ENCODE measurements at regions of chr18 and their contacts with region 1.

Region 1: DNA sequence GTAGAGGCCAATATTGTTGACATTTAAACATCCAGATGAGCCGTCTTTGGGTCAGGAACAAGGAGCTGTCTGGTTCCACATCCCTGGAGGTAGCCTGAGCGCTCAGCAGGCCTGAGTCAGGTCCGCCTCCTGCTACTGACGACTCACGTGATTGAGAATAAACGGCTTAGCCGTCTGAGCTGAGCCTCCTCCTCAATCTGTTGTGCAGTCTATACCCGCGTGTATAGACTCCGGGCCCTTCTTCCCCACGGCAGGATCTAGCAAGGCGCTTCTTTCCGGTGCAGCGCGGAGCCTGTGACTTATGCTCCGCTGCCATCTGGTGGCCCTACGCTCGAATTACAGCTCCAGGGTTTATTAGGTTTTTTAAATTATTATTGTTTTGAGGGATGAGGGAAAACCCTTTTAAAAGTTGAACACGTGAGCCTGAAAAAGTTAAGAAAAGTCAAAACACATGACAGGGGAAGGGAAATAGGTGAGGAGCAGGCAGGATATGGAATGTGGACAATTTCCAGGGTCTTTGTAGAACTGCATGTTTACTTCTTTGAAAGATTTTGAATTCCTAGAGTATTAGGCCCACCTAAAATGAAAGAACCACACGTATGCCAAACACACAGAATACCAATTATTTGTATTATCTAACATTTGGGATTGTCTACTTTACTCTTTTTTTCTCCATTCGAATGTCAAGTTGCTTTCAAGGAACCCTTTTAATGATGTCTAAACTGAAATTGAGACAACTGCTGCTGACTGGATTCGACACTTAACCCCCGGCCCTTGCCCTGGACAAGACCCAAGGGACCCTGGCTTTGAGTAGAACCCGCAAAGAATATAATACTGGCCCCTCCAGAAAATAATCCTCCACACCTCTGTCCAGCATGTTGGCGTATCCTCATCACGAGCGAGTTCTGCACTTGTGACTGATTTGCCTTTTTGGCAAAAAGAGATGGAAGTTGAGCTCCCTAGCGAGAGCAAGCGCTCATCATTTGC is 112.4 kb upstream of the ZNF236 start:
- DNase-seq: peak; percentile 71
- ATAC-seq: peak; percentile 86
- H3K4me3 Mint-ChIP-seq: no peak overlapping the region
- H3K27ac Mint-ChIP-seq: peak overlapping the region; percentile 30
- H3K4me1 Mint-ChIP-seq: peaks cover 2% of the 10 kb centered on the region
- H3K27me3 Mint-ChIP-seq: peaks cover 6% of the 10 kb centered on the region

Region 2: DNA sequence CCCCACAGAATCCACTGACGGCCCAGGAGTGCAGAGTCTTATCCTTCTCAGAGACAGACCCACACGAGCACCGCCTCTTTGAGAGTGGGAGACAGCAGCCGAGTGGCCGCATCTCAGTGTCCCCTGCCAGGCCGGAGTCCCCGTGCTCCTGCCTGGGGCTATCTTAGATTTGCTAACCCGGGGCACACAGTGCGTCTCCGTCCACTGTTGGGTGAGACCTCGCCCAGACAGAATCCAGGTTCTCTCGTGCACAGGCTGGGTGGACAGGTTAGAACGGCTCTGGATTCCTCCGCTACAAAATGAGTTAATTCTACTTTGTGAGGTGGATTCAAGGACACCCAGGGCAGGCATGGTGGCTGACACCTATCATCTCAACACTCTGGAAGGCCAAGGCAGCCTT is 303.2 kb before region 1 on chr18:
- CTCF ChIA-PET with region 1: interaction called, 22 read pairs
- DNase-seq: no peak
- ATAC-seq: no peak
- H3K4me3 Mint-ChIP-seq: no peak overlapping the region
- H3K27ac Mint-ChIP-seq: no peak overlapping the region
- H3K4me1 Mint-ChIP-seq: peaks cover 8% of the 10 kb centered on the region
- H3K27me3 Mint-ChIP-seq: peaks cover 9% of the 10 kb centered on the region

Region 3: GRCh38 chr18:76524900-76525698 is 184.9 kb before region 1 on chr18:
- CTCF ChIA-PET with region 1: no interaction called
- DNase-seq: no peak
- ATAC-seq: no peak
- H3K4me3 Mint-ChIP-seq: no peak overlapping the region
- H3K27ac Mint-ChIP-seq: no peak overlapping the region
- H3K4me1 Mint-ChIP-seq: peaks cover 6% of the 10 kb centered on the region
- H3K27me3 Mint-ChIP-seq: peaks cover 30% of the 10 kb centered on the region

Region 4: GRCh38 chr18:76658627-76659026 is 51.3 kb before region 1 on chr18:
- CTCF ChIA-PET with region 1: interaction called, 18 read pairs
- DNase-seq: peak; percentile 60
- ATAC-seq: peak; percentile 67
- H3K4me3 Mint-ChIP-seq: no peak overlapping the region
- H3K27ac Mint-ChIP-seq: no peak overlapping the region
- H3K4me1 Mint-ChIP-seq: peaks cover 21% of the 10 kb centered on the region
- H3K27me3 Mint-ChIP-seq: peaks cover 50% of the 10 kb centered on the region

Region 5: GRCh38 chr18:76699923-76700322 is 10.0 kb before region 1 on chr18:
- CTCF ChIA-PET with region 1: interaction called, 12 read pairs
- DNase-seq: no peak
- ATAC-seq: no peak
- H3K4me3 Mint-ChIP-seq: no peak overlapping the region
- H3K27ac Mint-ChIP-seq: no peak overlapping the region
- H3K4me1 Mint-ChIP-seq: no peaks in the 10 kb centered on the region
- H3K27me3 Mint-ChIP-seq: peaks cover 54% of the 10 kb centered on the region

Measured in activated CD8-positive, alpha-beta memory T cell treated with anti-CD3 and anti-CD28 coated beads, Interleukin-2, amount 10 ng/mL, durations not matched to agents 7 days and 5 days (primary cell).